AG04449 (cell line): ENCODE measurements at regions of chr5 and their contacts with region 1.

Region 1: DNA sequence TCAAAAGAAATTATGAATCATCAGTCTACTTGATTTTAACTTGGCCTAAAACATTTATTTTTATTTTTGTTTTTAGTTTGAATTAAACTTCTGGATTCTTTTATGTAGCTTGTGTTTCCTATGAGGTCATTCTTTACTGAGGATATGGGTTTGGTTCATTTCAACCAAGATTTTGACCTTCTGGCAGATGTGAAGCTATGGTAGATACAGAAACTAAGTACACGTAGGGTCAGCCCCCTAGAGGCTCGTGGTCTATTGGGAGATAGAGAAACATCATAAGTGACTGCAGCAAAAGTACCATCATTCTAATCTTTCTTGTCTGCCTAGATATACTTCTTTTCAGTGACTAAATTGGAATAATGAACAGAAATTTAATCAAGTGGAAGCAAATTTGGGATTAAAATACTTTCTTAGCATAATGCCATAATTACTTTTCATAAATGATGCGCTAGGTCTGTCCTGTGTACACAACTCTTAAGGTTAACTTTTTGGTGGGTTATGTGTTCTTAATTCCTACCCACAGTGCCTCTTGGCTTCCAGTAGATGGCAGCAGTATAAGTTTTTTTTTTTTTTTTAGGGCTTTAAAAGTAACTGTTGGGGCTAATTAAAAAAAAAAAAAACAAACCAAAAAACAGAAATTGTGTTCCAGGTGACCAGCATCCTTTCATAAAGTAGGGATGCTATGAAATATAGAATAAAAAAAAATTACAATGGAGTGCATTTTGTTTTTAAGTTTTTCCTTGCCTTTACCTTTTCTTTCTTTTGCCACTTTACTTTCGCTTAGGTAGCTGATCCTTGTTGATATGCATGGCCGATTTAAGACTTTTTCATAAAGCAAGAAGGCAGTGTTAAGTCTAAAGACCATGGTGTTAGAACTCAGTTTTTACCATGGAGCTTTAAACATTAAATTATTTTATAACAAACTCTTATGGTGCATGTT is 49.9 kb downstream of the LRRTM2 start:
- DNase-seq: no peak
- H3K4me3 ChIP-seq: no peak overlapping the region
- CTCF ChIP-seq: peak; percentile 36

Region 2: GRCh38 chr5:138686668-138687067 is 138.5 kb before region 1 on chr5:
- CTCF ChIA-PET with region 1: no interaction called
- POLR2A ChIA-PET with region 1: no interaction called
- DNase-seq: no peak
- H3K4me3 ChIP-seq: no peak overlapping the region
- CTCF ChIP-seq: no peak

Region 3: DNA sequence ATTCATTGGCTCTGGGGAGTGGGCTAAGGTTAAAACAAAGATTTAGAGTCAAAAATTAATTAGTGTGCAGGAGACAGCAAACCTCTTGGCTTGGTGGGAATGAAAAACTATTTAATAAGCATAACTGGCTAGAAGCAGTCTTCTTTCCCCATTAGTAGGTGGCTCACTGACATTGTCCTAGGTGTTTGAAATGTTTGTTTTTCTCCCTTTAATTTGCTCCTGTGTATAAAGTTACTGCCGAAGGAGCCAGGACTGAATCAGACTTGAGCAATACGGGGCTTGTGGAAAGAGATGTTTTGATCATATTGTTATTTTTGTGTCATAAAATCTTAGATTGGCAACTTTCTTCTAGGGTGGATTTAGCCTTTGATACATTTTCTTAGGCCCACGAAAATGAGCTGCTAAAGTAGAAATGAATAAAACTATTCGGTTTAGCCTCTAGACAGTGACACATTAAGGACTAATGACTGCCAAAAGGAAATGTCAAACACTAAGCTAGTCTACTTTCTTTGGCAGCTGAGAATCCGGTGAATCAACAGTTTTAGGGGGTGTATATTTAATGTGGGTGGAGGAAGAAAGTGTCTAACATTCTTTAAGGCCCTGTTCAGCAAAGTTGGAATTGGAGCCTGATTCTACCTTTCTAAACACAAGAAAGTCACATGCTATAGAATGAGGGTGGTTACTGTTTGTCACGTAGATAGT is 19.8 kb after region 1 on chr5:
- CTCF ChIA-PET with region 1: interaction called, 54 read pairs
- POLR2A ChIA-PET with region 1: no interaction called
- DNase-seq: peak; percentile 55
- H3K4me3 ChIP-seq: no peak overlapping the region
- CTCF ChIP-seq: no peak

Region 4: GRCh38 chr5:139091439-139092156 is 266.4 kb after region 1 on chr5:
- CTCF ChIA-PET with region 1: no interaction called
- POLR2A ChIA-PET with region 1: no interaction called
- DNase-seq: no peak
- H3K4me3 ChIP-seq: no peak overlapping the region
- CTCF ChIP-seq: no peak